ENCODE measurements at regions of chr6 and their contacts with region 1.

Region 1: DNA sequence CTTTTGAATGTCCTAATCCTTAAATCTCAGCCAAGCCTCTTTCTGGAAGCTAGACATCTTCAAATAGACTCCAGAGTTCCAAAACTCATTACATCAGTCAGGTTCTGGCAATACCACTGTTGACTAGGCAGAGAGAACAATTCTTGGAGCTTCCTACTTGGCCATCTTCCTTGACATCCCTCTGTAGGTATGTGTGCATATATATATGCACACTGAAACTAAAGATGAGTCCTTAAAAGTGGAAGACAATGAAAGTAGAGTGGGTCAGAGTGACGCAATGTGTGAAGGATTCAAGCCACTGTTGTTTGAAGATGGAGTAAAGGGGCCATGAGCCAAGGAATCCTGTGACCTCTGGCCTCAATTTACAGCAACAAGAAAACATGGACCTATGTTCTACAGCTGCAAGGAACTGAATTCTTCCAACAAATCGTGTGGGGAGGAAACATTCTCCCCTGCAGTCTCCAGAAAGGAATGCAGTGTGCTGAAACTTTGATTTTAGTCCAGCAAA is 18.7 kb upstream of the DUSP22 start:
- DNase-seq: no peak
- H3K4me3 Mint-ChIP-seq: no peak overlapping the region
- H3K27ac Mint-ChIP-seq: no peak overlapping the region
- H3K4me1 Mint-ChIP-seq: peaks cover 15% of the 10 kb centered on the region
- H3K27me3 Mint-ChIP-seq: peaks cover 4% of the 10 kb centered on the region

Region 2: GRCh38 chr6:235763-236360 is 37.7 kb before region 1 on chr6:
- intact Hi-C with region 1: loop called (anchors 1 kb)
- DNase-seq: peak; percentile 41
- H3K4me3 Mint-ChIP-seq: peak overlapping the region; percentile 56
- H3K27ac Mint-ChIP-seq: peak overlapping the region; percentile 88
- H3K4me1 Mint-ChIP-seq: peaks cover 57% of the 10 kb centered on the region
- H3K27me3 Mint-ChIP-seq: no peaks in the 10 kb centered on the region

Region 3: GRCh38 chr6:251920-252319 is 21.7 kb before region 1 on chr6:
- intact Hi-C with region 1: loop called (anchors 1 kb)
- DNase-seq: no peak
- H3K4me3 Mint-ChIP-seq: peak overlapping the region; percentile 48
- H3K27ac Mint-ChIP-seq: peak overlapping the region; percentile 90
- H3K4me1 Mint-ChIP-seq: peaks cover 38% of the 10 kb centered on the region
- H3K27me3 Mint-ChIP-seq: peaks cover 3% of the 10 kb centered on the region

Region 4: DNA sequence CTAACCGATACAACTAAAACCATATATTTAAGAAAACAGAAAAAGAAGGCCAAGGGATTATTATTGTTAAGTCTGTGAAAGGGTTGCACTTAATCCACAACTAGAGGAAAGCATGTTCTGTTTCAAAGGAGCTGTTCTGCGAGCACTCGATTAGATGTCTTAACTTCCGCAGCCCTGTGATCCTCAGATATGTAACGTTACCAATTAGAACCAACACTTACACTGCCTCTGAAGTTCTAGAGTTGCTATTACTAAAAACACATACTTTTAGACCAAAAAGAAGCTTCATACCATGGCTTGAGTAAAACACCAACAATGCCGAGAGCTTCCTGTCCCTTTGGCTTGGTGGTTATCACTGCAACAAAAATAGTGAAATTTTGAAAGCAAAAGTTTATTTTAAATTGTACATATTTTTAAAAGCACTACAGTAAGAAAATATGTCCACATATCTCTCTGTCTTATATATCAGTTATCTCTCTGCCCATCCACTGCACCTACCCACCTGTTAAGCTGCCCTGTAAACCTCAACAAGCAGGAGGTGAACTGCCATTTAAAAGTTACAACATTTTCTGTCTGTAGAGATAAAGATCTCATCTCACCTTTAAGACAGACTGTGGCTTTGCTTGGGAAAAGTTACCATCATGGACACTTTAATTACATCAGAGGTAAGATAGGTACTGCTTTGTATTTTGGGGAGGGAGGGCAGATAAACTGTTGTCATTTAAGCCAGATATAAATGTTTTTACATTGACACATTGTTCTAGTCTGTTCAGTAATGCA is 11.6 kb after region 1 on chr6:
- intact Hi-C with region 1: loop called (anchors 2 kb)
- DNase-seq: no peak
- H3K4me3 Mint-ChIP-seq: no peak overlapping the region
- H3K27ac Mint-ChIP-seq: peak overlapping the region; percentile 0
- H3K4me1 Mint-ChIP-seq: peaks cover 29% of the 10 kb centered on the region
- H3K27me3 Mint-ChIP-seq: no peaks in the 10 kb centered on the region

Region 5: GRCh38 chr6:319177-320131 is 45.8 kb after region 1 on chr6:
- intact Hi-C with region 1: loop called (anchors 2 kb)
- DNase-seq: no peak
- H3K4me3 Mint-ChIP-seq: no peak overlapping the region
- H3K27ac Mint-ChIP-seq: no peak overlapping the region
- H3K4me1 Mint-ChIP-seq: peaks cover 10% of the 10 kb centered on the region
- H3K27me3 Mint-ChIP-seq: peaks cover 2% of the 10 kb centered on the region

Measured in activated T-helper 1 cell treated with anti-CD3 and anti-CD28 coated beads, Interleukin-12 subunit alpha, Interleukin-12 subunit beta, Interleukin-2, Interleukin-4 antibody, amounts not matched to agents 30 ng/mL and 10 ng/mL and 1 ng/mL, durations not matched to agents 14 hours and 24 hours and 36 hours (primary cell).